Lower lobe of right lung (tissue), 2 donors: ENCODE measurements at regions of chr12 and their contacts with region 1.

Region 1: DNA sequence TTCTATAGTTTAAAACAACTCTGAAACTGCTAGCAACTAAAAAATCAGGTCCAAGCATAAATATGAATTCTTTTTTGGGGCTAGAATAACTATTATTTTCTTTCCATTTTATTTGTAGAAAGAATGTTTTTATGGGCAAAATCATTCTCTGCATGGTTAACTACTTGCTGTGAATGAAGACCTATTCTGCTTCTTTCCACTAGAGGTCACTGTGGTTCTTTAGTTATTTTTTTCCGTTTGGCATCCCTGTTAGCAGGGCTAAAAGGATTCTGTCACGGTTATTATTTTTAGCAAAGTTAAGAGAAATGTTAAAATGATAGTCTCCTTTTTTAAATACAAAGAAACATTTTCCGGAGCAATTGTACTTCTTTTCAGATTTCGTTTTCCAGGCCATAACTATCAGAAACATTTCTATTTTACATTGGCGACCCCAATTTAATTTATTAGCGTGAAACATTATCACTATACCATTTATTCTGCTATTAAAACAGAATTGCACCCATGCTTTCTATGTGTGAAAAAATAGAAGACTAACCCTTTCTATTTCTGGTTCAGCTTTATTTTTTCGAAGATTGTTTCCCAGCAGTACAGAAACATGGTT is 404.8 kb downstream of the ATP23 start:
- DNase-seq: no peak
- ATAC-seq: peak in 1 of 2 donors; percentile 59
- H3K4me3 ChIP-seq: no peak overlapping the region
- H3K27ac ChIP-seq: no peak overlapping the region
- H3K4me1 ChIP-seq: no peaks in the 10 kb centered on the region
- H3K27me3 ChIP-seq: no peaks in the 10 kb centered on the region
- CTCF ChIP-seq: peak; percentile 79

Region 2: DNA sequence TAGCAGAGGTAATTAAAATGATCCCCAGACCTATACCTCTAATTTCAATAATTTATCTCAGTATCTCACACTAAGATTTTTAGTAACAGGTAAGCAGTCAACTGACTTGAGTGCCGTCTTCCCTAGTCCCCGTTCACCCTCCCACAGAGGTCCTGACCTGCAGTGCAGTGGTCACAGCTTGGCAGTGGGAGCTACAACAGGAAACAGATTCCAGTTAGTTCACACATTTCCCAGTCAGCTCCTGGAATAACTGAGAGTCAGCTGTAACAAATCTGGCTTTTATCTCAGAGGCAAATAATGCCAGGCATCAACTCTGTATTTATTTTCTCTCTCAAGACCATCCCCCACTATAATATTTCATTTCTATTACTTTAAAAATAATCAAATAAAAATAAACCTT is 96.5 kb before region 1 on chr12:
- intact Hi-C with region 1: no loop called
- DNase-seq: no peak
- ATAC-seq: no peak
- H3K4me3 ChIP-seq: no peak overlapping the region
- H3K27ac ChIP-seq: no peak overlapping the region
- H3K4me1 ChIP-seq: no peaks in the 10 kb centered on the region
- H3K27me3 ChIP-seq: no peaks in the 10 kb centered on the region
- CTCF ChIP-seq: no peak

Region 3: DNA sequence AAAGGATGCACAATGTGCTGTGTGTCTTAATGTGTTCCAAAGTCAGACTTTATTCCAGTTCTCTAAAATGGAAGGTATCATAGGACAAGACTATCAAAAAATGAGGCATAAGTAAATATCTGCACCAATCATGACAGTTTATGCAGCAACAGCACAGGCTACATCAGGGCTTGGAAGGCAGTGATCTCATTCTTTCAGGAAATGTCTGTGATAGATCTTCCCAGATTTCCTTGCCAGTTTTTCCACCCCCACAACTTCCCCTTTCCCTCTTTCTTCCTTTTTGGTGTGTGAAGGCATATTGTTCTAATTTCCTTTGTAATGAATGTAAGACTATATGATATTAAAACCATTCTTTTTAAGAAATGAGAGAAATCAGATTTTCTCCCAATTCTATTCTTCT is 78.1 kb before region 1 on chr12:
- intact Hi-C with region 1: no loop called
- DNase-seq: no peak
- ATAC-seq: no peak
- H3K4me3 ChIP-seq: no peak overlapping the region
- H3K27ac ChIP-seq: no peak overlapping the region
- H3K4me1 ChIP-seq: no peaks in the 10 kb centered on the region
- H3K27me3 ChIP-seq: no peaks in the 10 kb centered on the region
- CTCF ChIP-seq: no peak

Region 4: GRCh38 chr12:58750484-58750883 is 404.4 kb after region 1 on chr12:
- intact Hi-C with region 1: no loop called
- DNase-seq: no peak
- ATAC-seq: no peak
- H3K4me3 ChIP-seq: no peak overlapping the region
- H3K27ac ChIP-seq: no peak overlapping the region
- H3K4me1 ChIP-seq: no peaks in the 10 kb centered on the region
- H3K27me3 ChIP-seq: no peaks in the 10 kb centered on the region
- CTCF ChIP-seq: no peak

Region 5: GRCh38 chr12:59087077-59087673 is 741.0 kb after region 1 on chr12:
- intact Hi-C with region 1: loop called (anchors 10 kb)
- DNase-seq: no peak
- ATAC-seq: peak in 1 of 2 donors; percentile 54
- H3K4me3 ChIP-seq: no peak overlapping the region
- H3K27ac ChIP-seq: no peak overlapping the region
- H3K4me1 ChIP-seq: peaks cover 5% of the 10 kb centered on the region
- H3K27me3 ChIP-seq: no peaks in the 10 kb centered on the region
- CTCF ChIP-seq: peak; percentile 52